ENCODE measurements at regions of chr17 and their contacts with region 1.

Region 1: DNA sequence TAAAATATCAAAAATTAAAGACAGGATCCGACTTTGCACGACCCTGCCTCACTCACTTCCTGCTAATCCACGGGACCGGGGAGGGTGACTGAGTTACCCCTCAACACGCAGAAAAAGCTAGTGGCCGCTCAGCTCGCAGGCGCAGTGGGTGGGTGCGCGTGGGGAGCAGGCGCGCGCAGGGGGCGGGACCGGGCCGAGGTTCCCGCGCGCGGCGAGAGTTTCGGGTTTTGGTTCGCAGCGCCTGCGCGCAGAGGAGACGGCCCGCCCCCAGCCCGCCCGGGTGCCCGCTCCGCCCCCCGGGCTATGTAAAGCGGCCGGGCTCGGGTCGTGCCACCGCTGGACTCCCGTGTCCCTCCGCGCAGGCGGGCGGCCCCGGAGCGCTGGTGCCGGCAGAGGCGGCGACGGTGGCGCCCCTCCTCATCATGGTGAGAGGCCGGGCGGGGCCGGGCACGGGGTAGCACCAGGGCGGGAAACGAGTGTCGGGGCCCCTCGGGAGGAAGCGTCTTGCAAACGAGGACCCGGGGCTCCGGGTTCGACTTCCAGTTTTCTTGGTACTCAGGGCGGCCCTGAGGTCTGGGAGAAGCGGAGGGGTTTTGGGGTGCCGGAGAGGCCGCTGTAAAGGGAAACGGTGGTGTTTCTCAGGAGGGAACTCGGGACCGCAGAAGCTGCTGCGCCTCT is at the start of gene CNP:
- DNase-seq: peak; percentile 87
- H3K4me3 Mint-ChIP-seq: peak within 1 kb of the TSS; percentile 87
- H3K27ac Mint-ChIP-seq: peak within 1 kb of the TSS; percentile 82
- H3K4me1 Mint-ChIP-seq: peaks cover 29% of the 10 kb centered on the region
- H3K27me3 Mint-ChIP-seq: no peaks in the 10 kb centered on the region
- total RNA-seq, gene CNP: 89.1 and 89.8 TPM in 2 replicates

Region 2: DNA sequence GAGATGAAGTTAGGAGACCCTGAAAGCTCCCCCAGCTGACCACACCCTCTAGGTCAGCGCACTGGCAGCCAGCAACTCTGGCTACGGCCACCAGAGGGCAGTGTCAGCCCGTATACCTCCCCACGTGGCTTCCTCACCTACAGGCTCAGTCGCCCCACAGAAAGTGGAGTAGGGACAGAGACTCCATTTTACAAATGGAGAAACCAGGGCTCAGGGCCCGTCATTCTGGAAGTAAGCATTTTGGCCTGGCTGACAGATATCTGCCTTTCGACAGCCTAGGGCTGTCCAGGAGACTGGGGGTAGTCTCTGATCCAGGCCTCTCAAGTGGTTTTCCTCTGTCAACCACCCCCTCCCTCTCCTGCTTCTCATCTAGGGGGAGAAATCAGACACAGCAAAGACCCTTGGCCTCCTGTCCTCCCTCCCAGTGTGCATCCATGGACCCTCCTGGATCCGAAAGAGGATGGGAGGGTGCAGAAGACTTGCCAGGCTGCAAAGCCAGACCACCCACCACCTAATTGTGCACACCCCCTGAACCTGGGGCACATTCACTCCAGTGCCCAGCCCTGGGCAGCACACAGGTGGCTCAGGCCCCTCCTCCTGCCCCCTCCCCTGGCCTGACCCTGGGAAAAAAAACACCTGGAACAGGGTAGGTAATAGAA is 228.4 kb before region 1 on chr17:
- intact Hi-C with region 1: loop called (anchors 2 kb)
- DNase-seq: peak; percentile 76
- H3K4me3 Mint-ChIP-seq: no peak overlapping the region
- H3K27ac Mint-ChIP-seq: no peak overlapping the region
- H3K4me1 Mint-ChIP-seq: peaks cover 5% of the 10 kb centered on the region
- H3K27me3 Mint-ChIP-seq: peaks cover 34% of the 10 kb centered on the region

Region 3: GRCh38 chr17:41907185-41907556 is 59.4 kb before region 1 on chr17:
- intact Hi-C with region 1: no loop called
- DNase-seq: no peak
- H3K4me3 Mint-ChIP-seq: no peak overlapping the region
- H3K27ac Mint-ChIP-seq: no peak overlapping the region
- H3K4me1 Mint-ChIP-seq: no peaks in the 10 kb centered on the region
- H3K27me3 Mint-ChIP-seq: no peaks in the 10 kb centered on the region

Region 4: DNA sequence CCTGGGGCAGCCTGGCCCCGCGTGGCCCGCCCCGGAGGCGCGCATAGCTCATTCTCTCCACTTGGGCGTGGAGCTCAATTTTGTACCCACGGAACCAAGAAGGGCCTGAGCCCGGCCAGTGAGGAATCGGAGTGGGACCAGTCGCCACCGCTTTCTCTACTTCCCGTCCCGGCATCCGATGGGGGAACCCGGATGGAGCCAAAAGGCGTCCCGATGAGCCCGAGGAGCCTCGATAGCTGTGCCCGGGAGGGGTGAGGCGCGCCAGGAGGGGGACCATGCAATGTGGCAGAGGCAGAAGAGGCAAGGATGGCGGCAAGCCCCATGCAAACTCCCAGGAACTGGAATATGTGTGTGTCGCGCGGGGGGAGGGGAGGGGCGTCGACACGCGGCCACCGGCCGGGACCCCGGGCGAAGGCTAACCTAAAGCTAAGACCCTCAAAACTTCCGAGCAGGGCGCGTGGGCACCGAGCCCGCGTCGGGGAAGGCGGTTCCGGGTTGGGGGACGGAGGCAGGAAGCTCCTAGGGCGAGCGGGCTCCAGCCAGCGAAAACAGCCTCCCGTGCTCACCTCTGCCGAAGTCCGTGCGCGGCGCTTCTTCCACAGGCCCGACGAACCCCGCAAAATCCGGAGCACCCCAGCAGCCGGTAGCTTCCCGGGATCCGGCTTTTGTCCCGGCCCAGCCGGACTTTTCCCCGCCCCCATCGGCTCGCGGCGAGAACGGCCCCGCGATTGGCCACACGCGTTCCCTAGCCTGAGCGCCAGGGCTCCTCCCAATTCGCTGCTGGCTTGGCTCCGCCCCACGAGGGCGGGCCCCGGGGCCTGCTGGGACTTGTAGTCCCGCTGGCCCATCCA is 48.1 kb before region 1 on chr17 and contains the start of gene ACLY:
- intact Hi-C with region 1: loop called (anchors 1 kb)
- DNase-seq: peak; percentile 98
- H3K4me3 Mint-ChIP-seq: peak within 1 kb of the TSS; percentile 95
- H3K27ac Mint-ChIP-seq: peak within 1 kb of the TSS; percentile 90
- H3K4me1 Mint-ChIP-seq: peaks cover 32% of the 10 kb centered on the region
- H3K27me3 Mint-ChIP-seq: no peaks in the 10 kb centered on the region
- total RNA-seq, gene ACLY: 200 and 211 TPM in 2 replicates

Region 5: GRCh38 chr17:41930009-41930832 is 36.4 kb before region 1 on chr17 and contains the start of gene ODAD4:
- intact Hi-C with region 1: loop called (anchors 1 kb)
- DNase-seq: peak; percentile 95
- H3K4me3 Mint-ChIP-seq: peak within 1 kb of the TSS; percentile 97
- H3K27ac Mint-ChIP-seq: peak within 1 kb of the TSS; percentile 96
- H3K4me1 Mint-ChIP-seq: peaks cover 35% of the 10 kb centered on the region
- H3K27me3 Mint-ChIP-seq: no peaks in the 10 kb centered on the region
- total RNA-seq, gene ODAD4: 0.39 and 0.73 TPM in 2 replicates

Region 6: GRCh38 chr17:42101513-42102319 is 135.1 kb after region 1 on chr17:
- intact Hi-C with region 1: loop called (anchors 1 kb)
- DNase-seq: peak; percentile 50
- H3K4me3 Mint-ChIP-seq: no peak overlapping the region
- H3K27ac Mint-ChIP-seq: no peak overlapping the region
- H3K4me1 Mint-ChIP-seq: peaks cover 7% of the 10 kb centered on the region
- H3K27me3 Mint-ChIP-seq: peaks cover 16% of the 10 kb centered on the region

Region 7: GRCh38 chr17:42112552-42113176 is 146.1 kb after region 1 on chr17 and contains the start of gene DHX58:
- intact Hi-C with region 1: loop called (anchors 1 kb)
- DNase-seq: peak; percentile 83
- H3K4me3 Mint-ChIP-seq: peak within 1 kb of the TSS; percentile 85
- H3K27ac Mint-ChIP-seq: peak within 1 kb of the TSS; percentile 86
- H3K4me1 Mint-ChIP-seq: peaks cover 50% of the 10 kb centered on the region
- H3K27me3 Mint-ChIP-seq: no peaks in the 10 kb centered on the region
- total RNA-seq, gene DHX58: 26.9 and 28.4 TPM in 2 replicates

Region 8: DNA sequence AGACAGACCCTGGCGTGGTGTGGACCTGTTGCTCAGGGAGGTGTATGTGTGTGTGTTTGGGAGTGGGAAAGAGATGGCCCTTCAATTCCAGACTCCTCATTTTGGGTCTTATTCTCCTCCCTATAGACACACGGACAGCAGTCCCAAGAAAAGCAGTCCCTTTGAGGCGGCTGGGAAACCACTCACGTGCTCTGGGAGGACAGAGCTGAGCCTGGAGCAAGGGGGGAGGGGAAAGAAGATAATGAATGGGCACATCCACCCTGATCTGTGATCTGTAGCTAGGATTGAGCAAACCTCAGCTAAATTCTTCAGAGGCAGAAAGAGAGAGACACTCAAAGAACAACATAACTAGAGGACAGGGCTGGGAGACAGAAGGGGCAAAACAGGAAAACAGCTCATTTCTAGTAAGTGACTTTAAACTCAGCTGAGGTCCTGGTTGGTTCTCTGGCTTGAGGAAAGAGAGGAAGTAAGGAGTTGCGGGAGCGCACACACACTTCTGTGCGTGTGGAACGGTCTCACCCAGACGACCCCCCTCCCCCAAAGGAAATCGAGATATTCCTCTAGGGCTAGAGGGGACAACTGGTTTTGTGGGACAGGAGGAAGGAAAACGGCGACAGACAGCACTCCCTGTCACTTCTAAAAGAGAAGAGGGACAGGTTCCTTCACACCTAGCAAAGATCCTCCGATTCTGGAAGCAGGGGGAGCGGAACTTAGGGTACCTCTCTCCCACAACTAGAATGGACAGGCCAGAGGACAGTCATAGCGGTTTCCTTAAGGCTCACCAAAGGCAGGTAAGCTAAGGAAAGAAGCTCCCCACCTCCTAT is 187.5 kb after region 1 on chr17:
- intact Hi-C with region 1: loop called (anchors 1 kb)
- DNase-seq: no peak
- H3K4me3 Mint-ChIP-seq: peak overlapping the region; percentile 89
- H3K27ac Mint-ChIP-seq: peak overlapping the region; percentile 75
- H3K4me1 Mint-ChIP-seq: peaks cover 25% of the 10 kb centered on the region
- H3K27me3 Mint-ChIP-seq: no peaks in the 10 kb centered on the region